ENCODE measurements at regions of chr1 and their contacts with region 1.

Region 1: DNA sequence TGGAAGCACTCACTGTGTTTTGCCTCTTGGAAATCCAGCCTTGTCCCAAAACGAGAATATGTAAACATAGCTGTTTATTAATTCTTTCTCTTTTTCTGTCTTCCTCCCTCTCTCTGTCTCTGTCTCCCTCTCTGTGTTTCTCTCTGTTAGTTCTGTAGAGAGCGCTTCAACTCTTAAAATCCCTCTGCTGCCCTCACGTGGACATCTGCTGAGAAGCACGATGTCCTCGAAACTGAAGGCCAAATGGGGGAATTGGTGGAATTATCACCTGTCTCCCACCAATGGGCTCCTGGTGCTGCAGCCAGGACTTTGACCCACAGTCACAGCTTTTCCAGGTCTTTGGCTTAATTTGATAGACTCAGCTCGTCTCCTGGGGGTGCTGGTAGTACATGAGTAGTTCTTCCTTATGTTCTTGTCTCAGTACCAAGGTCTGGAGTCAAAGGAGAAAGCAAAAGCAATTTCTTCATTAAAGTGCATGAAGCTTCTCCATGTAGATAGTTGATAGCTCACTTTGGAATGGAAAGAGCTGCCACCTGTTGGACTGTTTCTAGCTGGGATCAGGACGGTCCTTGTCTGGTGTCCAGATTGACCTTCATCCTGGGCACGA is 5.5 kb upstream of the GBP6 start:
- DNase-seq: peak; percentile 77
- ATAC-seq: peak; percentile 95
- H3K4me3 ChIP-seq: no peak overlapping the region
- H3K27ac ChIP-seq: no peak overlapping the region
- H3K4me1 ChIP-seq: peaks cover 3% of the 10 kb centered on the region
- H3K27me3 ChIP-seq: no peaks in the 10 kb centered on the region
- CTCF ChIP-seq: peak; percentile 81

Region 2: DNA sequence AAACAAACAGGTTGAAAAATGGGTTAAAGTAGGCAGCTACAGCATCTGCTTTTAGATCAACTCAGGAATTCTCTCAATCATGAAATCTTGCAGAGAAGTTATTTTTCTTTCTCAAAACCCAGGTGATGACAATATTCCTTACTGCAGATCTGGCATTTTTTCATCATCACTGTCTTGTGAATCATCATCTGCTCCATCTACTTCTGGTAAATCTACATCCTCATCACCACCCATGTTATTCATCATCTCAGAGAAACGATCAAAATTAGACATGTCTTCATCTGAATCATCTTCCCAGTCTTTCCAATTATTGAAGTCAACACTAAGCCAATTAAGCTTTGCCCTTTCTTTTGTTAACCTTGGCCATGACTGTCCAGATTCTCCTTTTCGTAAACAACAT is 254.2 kb before region 1 on chr1:
- intact Hi-C with region 1: no loop called
- DNase-seq: no peak
- ATAC-seq: no peak
- H3K4me3 ChIP-seq: no peak overlapping the region
- H3K27ac ChIP-seq: no peak overlapping the region
- H3K4me1 ChIP-seq: no peaks in the 10 kb centered on the region
- H3K27me3 ChIP-seq: no peaks in the 10 kb centered on the region
- CTCF ChIP-seq: no peak

Region 3: GRCh38 chr1:89274411-89274857 is 84.0 kb before region 1 on chr1:
- intact Hi-C with region 1: loop called (anchors 10 kb)
- DNase-seq: no peak
- ATAC-seq: peak; percentile 23
- H3K4me3 ChIP-seq: no peak overlapping the region
- H3K27ac ChIP-seq: peak overlapping the region; percentile 14
- H3K4me1 ChIP-seq: peaks cover 7% of the 10 kb centered on the region
- H3K27me3 ChIP-seq: no peaks in the 10 kb centered on the region
- CTCF ChIP-seq: no peak